GM10248 (cell line): ENCODE measurements at regions of chr11 and their contacts with region 1.

Region 1: DNA sequence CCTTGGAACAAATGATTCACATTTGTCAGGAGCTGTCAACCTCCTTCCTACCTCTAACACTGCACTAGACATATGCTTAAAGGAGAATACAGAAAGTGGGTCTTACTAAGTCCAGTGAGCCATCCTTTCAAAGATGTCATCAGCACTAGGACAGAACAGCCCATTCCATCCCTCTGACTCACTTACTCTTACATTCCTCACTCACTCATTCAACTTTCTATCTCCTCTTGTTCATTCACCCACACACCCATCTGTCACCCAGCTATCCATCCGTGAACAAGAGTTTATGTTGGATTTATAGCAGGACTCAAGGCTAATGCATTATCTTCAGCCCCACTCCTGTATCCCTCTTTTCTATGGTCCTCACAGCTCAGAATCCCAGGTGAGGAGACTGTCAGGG is 9.1 kb downstream of the INSC start:
- DNase-seq: no peak
- CTCF ChIP-seq: no peak

Region 2: GRCh38 chr11:14835491-14836105 is 288.3 kb before region 1 on chr11:
- CTCF ChIA-PET with region 1: no interaction called
- POLR2A ChIA-PET with region 1: no interaction called
- DNase-seq: no peak
- CTCF ChIP-seq: no peak

Region 3: GRCh38 chr11:15141381-15141780 is 17.5 kb after region 1 on chr11:
- CTCF ChIA-PET with region 1: interaction called, 16 read pairs
- POLR2A ChIA-PET with region 1: no interaction called
- DNase-seq: no peak
- CTCF ChIP-seq: no peak

Region 4: GRCh38 chr11:15258433-15259165 is 134.8 kb after region 1 on chr11:
- CTCF ChIA-PET with region 1: no interaction called
- POLR2A ChIA-PET with region 1: no interaction called
- DNase-seq: no peak
- CTCF ChIP-seq: no peak